HAP-1 (cell line): ENCODE measurements at regions of chr2 and their contacts with region 1.

Region 1: DNA sequence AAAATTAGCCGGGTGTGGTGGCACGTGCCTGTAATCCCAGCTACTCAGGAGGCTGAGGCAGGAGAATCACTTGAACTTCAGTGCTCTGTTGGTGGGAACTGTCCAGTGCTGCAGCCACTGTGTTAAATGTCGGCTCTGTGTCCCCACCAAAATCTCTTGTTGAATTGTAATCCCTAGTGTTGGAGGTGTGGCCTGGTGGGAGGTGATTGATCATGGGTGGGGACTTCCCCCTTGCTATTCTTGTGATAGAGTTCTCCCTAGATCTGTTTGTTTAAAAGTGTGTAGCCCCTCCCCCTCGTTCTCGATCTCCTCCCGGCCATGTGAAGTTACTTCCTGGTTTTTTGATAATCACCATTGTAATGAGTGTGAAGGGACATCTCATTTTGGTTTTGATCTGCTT is 9.8 kb upstream of the RPL31 start:
- DNase-seq: no peak
- H3K4me3 ChIP-seq: no peak overlapping the region
- H3K4me1 ChIP-seq: peaks cover 7% of the 10 kb centered on the region
- H3K27me3 ChIP-seq: no peaks in the 10 kb centered on the region

Region 2: DNA sequence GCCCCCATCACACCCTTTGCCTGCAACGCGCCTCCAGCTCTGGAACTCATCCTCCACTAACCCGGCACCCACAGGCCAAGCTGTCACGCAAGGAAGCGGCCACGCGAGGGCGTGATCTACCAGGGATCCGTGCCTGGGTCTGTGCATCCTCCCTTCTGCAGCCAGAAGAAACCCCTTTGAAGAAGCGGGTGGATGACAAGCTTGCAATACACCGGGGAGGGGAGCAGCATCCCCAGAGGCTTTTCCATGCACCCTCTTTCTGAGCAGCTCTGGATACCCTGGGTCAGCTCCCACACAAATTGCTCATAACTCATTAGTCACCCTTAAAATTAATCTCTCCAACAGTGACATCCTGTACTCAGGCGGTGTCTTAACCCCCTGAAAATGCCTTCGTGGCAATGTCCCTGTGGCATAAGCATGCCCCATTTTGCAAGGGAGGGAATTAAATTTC is 381.9 kb before region 1 on chr2:
- in situ Hi-C with region 1: loop called (anchors 5 kb)
- DNase-seq: peak; percentile 34 to 83
- H3K4me3 ChIP-seq: no peak overlapping the region
- H3K4me1 ChIP-seq: no peaks in the 10 kb centered on the region
- H3K27me3 ChIP-seq: no peaks in the 10 kb centered on the region

Region 3: DNA sequence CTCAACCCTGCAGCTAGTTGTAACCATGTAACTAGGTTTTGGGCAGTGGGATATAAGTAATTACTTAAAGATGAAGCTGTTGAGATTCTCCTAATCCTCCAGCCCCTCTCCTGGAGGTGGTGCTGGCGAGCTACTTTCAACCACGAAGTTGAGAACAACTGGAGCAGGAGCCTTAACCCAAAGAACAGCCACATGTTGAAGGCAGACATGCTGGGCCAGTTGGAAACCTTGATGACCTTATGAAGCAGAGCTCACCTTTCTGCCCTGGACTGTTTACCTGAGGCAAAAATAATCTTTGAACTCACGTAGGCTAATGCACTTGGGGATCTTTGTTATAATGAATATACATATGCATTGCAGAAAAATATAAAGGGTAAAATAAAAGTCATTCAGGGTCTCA is 261.9 kb before region 1 on chr2:
- in situ Hi-C with region 1: loop called (anchors 5 kb)
- DNase-seq: peak; percentile 36 to 73
- H3K4me3 ChIP-seq: no peak overlapping the region
- H3K4me1 ChIP-seq: peaks cover 6% of the 10 kb centered on the region
- H3K27me3 ChIP-seq: no peaks in the 10 kb centered on the region

Region 4: DNA sequence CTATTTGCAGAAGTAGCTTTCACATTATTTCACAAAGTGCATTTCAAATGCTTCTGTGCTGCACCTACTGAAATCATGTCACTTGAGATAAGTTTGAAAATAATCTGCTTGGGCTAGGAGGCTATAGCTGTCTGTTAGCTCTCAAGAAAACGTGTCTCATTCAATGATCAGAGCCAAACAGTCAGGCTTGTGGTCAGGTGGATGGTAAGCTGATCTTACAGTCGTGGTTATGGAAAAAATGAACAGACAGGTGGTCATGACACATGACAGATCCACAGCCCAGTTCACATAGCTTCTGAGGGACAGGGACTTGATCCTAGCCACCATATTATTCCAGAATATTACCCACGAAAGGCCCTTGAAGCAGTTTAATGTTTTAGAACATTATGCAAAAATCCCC is 509.2 kb after region 1 on chr2:
- in situ Hi-C with region 1: no loop called
- DNase-seq: no peak
- H3K4me3 ChIP-seq: no peak overlapping the region
- H3K4me1 ChIP-seq: no peaks in the 10 kb centered on the region
- H3K27me3 ChIP-seq: no peaks in the 10 kb centered on the region